AG04450 (cell line): ENCODE measurements at regions of chr17 and their contacts with region 1.

Region 1: DNA sequence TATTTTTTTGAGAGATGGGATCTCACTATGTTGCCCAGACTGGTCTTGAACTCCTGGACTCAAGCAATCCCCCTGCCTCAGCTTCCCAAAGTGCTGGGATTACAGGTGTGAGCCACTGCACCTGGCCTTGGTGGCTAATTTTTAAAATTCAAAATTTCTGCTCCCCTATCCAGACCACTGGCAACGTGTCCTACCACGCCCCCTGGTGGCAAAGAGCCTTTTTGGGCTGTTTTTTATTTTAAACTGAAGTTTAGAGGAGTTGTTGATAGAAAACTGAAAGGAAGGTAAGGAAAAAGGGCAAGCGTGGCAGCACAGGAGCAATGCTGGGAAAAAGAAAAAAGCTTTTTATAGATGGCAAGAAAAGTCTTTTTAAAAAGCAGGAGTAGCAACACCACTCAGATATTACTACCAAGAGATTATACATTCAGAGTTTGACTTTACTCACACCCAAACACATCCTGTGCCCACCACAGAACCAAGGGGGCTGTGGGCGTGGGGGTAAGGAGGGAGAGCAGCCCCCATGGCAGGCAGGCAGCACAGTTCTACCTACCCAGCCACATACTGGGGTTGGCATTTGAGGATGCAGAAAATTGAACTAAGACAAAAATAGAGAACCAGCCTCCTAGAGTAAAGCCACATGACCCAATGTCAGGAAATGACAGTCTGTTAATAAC is 4.2 kb upstream of the MXRA7 start:
- DNase-seq: no peak
- H3K4me3 ChIP-seq: no peak overlapping the region
- H3K27ac ChIP-seq: peak overlapping the region; percentile 98
- H3K27me3 ChIP-seq: no peaks in the 10 kb centered on the region
- CTCF ChIP-seq: peak; percentile 83

Region 2: DNA sequence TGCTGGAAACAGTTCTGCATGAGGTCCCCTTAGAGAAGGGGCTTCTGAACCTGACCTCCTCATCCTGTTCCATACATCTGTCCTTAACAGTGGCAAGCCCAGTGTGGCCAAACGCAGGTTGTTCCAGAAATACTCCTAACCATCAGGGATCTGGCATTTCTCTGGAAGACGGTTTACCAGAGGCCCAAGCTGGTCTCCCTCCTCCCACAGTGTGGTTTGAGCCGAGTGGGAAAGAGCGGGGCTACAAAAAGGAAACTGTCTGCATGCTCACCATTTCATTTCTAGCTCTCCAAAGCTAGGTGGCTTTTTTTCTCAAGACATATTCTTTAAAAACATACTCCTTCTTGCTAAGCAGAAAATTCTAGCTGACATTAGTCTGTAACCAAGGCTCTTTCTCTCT is 10.2 kb before region 1 on chr17:
- CTCF ChIA-PET with region 1: interaction called, 18 read pairs
- POLR2A ChIA-PET with region 1: interaction called, 4 read pairs
- DNase-seq: no peak
- H3K4me3 ChIP-seq: no peak overlapping the region
- H3K27ac ChIP-seq: no peak overlapping the region
- H3K27me3 ChIP-seq: no peaks in the 10 kb centered on the region
- CTCF ChIP-seq: no peak

Region 3: DNA sequence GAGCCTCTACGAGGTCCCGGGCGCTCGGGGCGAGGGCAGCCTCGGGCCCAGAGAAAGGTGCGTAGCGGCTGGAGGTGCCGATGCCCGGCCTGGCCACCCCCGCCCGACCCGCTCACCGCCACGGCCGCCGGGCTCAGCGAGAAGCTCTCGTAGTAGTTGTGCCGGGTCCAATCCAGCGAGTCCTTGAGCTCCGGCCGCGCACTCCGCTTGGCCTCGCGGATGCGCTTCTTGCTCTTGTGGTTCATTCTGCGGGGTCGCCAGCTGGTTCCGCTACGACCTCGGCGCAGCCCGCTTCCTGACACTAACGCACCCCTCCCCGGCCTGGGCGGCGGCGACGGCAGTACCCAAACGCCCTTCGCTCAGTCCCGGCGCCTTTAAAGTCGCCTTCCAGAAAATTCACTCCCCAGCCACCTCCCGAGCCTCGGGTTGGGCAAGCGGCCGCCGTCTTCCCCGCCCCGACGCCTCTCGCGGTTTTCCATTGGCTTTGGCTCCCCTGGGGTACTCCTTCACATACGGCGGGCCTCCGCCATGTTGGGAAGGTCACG is 11.3 kb after region 1 on chr17 and contains the start of gene JMJD6:
- CTCF ChIA-PET with region 1: interaction called, 14 read pairs
- POLR2A ChIA-PET with region 1: interaction called, 19 read pairs
- DNase-seq: peak; percentile 89
- H3K4me3 ChIP-seq: peak within 1 kb of the TSS; percentile 93
- H3K27ac ChIP-seq: peak within 1 kb of the TSS; percentile 94
- H3K27me3 ChIP-seq: no peaks in the 10 kb centered on the region
- CTCF ChIP-seq: no peak
- polyA plus RNA-seq, gene JMJD6: 12.4 and 17.3 TPM in 2 replicates

Region 4: DNA sequence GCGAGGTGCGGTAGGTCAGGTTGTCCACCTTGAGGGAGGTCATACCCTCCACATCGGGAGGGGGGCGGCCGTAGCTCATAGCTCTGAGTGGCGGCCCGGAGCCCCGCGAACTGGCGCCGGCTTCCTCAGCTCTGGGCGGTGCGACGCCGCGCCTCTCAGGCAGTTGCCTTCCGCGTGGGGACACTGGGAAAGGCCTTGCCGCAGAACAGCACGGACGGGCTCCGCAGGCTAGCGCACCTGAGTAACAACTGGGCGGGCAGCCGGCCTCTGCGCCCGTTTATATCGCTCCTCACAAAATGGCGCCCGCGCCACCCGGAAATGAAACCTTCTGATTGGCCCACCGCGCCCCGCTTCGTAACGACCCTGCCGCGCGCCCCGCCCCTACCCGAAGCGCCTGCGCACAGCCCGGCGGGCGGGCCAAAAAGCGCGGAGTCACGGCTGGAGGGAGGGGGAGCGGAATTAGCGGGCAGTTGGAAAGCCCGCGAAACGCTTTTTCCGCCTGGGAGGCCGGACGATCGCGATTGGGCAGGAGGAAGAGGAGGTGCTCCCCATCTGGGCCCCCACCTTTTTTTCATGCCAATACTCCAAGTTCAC is 22.2 kb after region 1 on chr17 and contains the start of gene SRSF2:
- CTCF ChIA-PET with region 1: interaction called, 5 read pairs
- POLR2A ChIA-PET with region 1: interaction called, 14 read pairs
- DNase-seq: peak; percentile 97
- H3K4me3 ChIP-seq: peak within 1 kb of the TSS; percentile 96
- H3K27ac ChIP-seq: peak within 1 kb of the TSS; percentile 96
- H3K27me3 ChIP-seq: no peaks in the 10 kb centered on the region
- CTCF ChIP-seq: no peak
- polyA plus RNA-seq, gene SRSF2: 170 and 184 TPM in 2 replicates

Region 5: GRCh38 chr17:76935331-76935730 is 220.4 kb after region 1 on chr17:
- CTCF ChIA-PET with region 1: no interaction called
- POLR2A ChIA-PET with region 1: no interaction called
- DNase-seq: no peak
- H3K4me3 ChIP-seq: no peak overlapping the region
- H3K27ac ChIP-seq: no peak overlapping the region
- H3K27me3 ChIP-seq: peaks cover 4% of the 10 kb centered on the region
- CTCF ChIP-seq: no peak